ENCODE measurements at regions of chr2 and their contacts with region 1.

Region 1: GRCh38 chr2:232854082-232854481 is 16.0 kb upstream of the SNORC start:
- DNase-seq: no peak
- CTCF ChIP-seq: no peak

Region 2: DNA sequence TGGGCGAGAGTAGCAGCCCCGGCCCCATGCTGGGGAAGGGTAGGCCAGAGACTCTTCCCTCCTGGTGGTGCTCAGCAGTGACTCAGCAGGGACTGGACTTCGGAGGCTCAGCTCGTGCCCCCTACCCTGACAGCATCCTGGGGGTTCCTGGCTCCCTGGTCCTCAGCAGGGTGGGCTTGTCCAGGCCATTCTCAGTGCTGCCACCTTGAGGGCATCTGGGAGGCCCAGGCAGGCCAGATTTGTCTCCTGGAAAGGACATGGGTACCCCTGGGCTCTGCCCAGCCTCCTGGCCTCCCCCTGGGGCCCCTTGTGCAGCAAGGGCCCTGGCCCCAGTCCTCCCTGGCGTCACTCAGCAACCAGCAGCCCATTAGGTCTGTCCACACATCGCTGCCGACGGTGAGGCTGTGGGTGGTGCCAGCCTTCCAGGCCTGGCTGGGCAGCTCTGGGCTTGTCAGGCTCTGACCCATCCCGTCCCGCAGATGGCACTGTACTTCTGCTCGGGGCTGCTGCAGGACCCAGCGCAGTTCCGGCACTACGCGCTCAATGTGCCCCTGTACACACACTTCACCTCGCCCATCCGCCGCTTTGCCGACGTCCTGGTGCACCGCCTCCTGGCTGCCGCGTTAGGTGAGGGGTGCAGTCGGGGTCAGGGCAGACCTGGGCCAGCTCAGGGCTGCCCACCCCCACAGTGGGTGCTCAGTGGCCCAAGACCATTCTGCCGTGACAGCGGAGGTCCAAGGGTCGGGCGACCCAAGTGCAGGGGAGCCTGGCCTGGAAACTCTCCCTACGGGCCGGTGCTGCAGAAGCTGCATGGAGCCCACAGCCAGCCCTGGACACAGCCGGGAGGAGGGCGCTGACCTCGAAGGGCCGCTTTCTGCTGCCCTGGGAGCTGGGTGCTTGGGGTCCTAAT is 520.5 kb before region 1 on chr2:
- in situ Hi-C with region 1: no loop called
- DNase-seq: no peak
- CTCF ChIP-seq: peak; percentile 55

Region 3: DNA sequence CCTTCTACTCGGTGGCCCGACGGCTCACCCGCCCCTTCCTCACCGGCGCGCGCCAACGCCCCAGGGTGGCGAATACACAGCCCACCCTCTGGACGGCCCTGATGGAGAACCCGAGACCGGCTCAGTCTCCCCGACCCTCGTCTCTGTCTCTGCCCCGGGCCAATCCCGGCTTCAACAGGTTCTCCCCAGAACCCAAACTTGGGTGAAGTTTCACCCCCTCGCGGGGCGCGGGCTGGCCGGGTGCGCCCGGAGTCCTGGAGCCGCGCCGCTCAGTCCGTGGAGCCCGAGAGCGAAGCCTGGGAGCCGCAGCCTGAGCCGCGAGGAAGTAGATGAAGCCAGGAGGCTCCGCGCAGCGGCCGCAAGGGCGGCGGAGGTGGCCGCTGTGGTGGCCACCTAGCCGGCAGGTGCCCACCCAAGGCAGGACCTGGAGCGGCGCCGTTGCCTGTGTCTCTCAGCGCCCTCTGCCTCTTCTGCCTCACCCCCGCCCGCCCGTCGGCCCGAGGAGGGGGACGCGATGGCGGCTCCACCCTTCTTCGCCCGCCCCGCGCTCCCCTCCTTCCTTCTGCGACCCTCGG is 502.1 kb before region 1 on chr2:
- in situ Hi-C with region 1: no loop called
- DNase-seq: no peak
- CTCF ChIP-seq: no peak

Region 4: GRCh38 chr2:233026192-233026813 is 172.2 kb after region 1 on chr2:
- in situ Hi-C with region 1: loop called (anchors 25 kb)
- DNase-seq: no peak
- CTCF ChIP-seq: no peak

Region 5: GRCh38 chr2:233163486-233164103 is 309.5 kb after region 1 on chr2:
- in situ Hi-C with region 1: no loop called
- DNase-seq: no peak
- CTCF ChIP-seq: no peak

Region 6: DNA sequence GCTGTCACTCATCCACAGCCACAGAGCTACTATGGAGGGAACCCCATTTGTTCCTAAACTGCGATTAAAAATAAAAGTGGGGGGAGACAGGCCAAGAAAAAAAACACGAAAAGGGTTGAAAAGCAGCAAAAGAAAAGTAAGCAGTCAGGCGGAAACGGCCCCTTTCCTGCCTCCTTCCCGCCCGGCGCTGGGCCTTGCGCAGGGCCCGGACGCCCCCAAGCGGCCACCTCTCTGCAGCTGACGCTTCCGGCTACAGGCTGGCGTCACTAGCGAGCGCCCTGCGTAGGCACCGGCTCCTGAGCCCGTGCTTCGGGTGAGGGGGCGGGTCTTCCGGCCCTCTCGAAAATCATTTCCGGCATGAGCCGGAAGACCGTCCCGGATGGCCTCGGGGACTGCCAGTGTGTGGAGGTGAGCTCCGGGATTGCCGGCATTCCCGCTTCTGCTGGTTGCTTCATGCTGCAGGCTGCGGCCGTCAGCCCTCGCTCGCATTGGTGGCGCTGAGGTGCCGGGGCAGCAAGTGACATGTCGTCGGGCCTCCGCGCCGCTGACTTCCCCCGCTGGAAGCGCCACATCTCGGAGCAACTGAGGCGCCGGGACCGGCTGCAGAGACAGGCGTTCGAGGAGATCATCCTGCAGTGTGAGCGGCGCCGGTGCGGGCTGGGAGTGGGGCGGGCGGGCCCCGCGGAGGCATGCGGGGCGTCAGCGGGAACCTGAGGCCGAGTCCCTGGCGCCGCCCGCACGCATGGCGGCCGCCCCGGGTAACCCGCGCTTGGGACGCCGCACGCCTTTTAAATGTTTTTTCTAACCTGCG is 397.4 kb after region 1 on chr2 and contains the start of gene ATG16L1:
- in situ Hi-C with region 1: loop called (anchors 25 kb)
- DNase-seq: peak; percentile 99
- CTCF ChIP-seq: peak; percentile 98

Measured in GM13977 (cell line).